ENCODE measurements at regions of chr6 and their contacts with region 1.

Region 1: DNA sequence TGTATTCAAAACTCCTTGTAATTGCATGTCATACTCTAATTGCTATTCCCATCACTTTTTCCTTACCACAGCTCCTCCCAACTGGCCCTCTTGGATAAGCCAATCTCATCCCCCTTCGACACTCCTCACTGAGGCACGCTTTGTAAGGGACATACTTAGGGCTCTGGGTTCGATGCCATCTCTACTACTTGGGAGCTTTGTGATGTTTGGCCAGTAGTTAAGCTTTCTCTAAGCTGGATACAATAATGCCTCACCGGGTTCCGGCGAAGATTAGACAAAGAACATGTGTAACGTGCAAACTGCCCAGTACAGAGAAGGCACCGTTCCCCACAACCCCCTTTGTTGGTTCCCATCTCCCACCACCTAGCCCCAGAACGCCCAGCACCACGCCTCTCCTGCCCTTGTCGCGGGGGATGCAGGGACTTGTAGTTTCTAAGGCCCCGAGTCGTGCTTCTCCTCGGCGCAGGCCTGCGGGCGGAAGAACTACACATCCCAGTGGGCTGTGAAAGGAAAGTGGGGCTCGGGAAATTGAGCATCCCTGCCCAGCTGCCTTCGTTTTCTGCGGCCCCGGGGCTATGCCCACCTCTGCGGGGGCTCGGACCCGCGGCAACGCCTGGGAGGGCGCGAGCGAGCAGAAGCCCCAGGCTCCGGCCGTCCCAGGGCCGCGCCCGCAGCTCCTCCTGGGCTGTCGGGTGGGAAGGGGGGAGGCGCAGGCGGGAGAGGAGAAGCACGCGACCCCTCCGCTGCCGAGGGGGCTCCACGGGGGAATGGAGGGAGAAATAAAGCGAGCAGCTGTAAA is 1.1 kb upstream of the ZDHHC14 start:
- DNase-seq: peak; percentile 85
- ATAC-seq: peak; percentile 73
- H3K4me3 ChIP-seq: peak overlapping the region; percentile 96
- H3K27ac ChIP-seq: no peak overlapping the region
- H3K4me1 ChIP-seq: peaks cover 11% of the 10 kb centered on the region; the same call in 1 of the 2 replicates
- H3K27me3 ChIP-seq: no peaks in the 10 kb centered on the region
- CTCF ChIP-seq: no peak

Region 2: DNA sequence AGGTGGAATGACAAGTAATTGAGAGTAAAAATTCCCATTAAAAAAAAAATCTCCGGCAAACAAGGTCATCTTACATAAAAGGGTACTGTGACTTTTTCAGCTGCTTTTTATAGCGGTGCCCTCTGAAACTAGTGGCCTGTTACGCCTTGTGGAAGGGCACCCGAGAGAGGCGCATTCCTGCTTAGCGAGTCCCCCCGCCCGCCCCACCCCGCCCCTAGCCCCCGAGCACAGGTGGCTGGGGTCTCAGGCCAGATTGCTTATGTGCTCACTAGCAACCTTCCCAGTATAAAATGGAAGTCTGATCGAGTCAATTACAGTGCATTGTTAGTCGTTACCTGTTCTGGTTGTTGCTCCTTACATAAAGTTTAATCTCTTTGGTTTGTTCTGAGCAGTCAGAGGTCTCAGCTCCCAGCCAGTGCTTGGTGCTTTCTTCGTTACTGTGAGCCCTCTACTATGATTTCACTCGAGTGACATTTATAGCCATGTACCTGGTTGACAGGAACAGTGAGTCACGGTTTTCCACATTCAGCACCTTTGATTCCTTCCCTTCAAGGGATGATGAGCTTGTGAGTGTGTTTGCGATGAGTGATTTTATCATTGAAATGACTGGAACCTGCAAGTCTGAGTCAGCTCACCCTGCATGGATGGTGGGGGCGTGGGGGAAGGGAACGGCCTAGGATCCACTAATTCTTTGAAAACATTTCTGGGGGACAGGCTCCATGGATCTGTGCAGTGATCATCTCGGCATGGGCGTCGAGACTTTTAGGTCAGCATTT is 48.8 kb after region 1 on chr6:
- CTCF ChIA-PET with region 1: no interaction called
- POLR2A ChIA-PET with region 1: no interaction called
- intact Hi-C with region 1: loop called (anchors 5 kb)
- DNase-seq: peak; percentile 95
- ATAC-seq: peak; percentile 93
- H3K4me3 ChIP-seq: peak overlapping the region; percentile 57; the same call in 1 of the 2 replicates
- H3K27ac ChIP-seq: peak overlapping the region; percentile 74
- H3K4me1 ChIP-seq: peaks cover 42% of the 10 kb centered on the region
- H3K27me3 ChIP-seq: no peaks in the 10 kb centered on the region
- CTCF ChIP-seq: no peak

Region 3: DNA sequence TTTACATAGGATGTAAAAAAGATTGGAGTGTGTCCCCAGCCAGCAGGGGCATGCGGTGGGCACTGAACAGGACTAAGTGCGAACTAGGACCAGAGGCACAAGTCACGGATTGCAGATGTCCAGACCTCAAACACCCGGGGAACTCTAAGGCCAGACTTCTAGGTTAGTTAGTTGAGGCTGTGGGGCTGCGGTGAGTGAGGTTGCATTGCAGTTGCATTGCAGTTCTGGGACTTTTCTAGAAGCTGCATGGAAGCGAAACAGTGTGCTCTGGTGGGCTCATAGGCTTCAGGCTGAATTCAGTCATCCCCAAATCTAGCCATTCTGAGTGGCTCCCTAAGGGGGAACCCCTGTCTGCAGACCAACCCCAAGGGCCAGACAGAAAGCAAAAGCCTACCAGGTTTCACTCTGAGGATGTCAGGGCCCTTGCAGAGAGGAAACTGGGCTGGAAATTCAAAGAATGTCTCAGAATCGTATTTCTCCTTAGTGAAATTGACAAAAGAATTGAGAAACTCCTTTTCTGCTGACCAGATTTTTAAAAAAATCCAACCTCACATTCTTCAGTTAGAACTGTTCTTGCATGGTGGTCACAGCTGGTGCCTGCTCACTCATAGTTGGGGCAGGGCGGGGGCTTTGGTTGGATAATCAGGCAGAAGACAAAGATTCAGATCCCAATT is 183.9 kb after region 1 on chr6:
- CTCF ChIA-PET with region 1: no interaction called
- POLR2A ChIA-PET with region 1: interaction called, 12 read pairs
- intact Hi-C with region 1: no loop called
- DNase-seq: no peak
- ATAC-seq: no peak
- H3K4me3 ChIP-seq: no peak overlapping the region
- H3K27ac ChIP-seq: no peak overlapping the region
- H3K4me1 ChIP-seq: no peaks in the 10 kb centered on the region
- H3K27me3 ChIP-seq: no peaks in the 10 kb centered on the region
- CTCF ChIP-seq: no peak

Region 4: GRCh38 chr6:157597446-157598312 is 217.8 kb after region 1 on chr6:
- CTCF ChIA-PET with region 1: no interaction called
- POLR2A ChIA-PET with region 1: no interaction called
- intact Hi-C with region 1: loop called (anchors 5 kb)
- DNase-seq: peak; percentile 69
- ATAC-seq: peak; percentile 85
- H3K4me3 ChIP-seq: no peak overlapping the region
- H3K27ac ChIP-seq: peak overlapping the region; percentile 20; the same call in 1 of the 2 replicates
- H3K4me1 ChIP-seq: peaks cover 14% of the 10 kb centered on the region
- H3K27me3 ChIP-seq: no peaks in the 10 kb centered on the region
- CTCF ChIP-seq: peak; percentile 67

Measured in PC-3 (cell line).